Prostate gland (tissue), 2 donors: ENCODE measurements at regions of chr5 and their contacts with region 1.

Region 1: DNA sequence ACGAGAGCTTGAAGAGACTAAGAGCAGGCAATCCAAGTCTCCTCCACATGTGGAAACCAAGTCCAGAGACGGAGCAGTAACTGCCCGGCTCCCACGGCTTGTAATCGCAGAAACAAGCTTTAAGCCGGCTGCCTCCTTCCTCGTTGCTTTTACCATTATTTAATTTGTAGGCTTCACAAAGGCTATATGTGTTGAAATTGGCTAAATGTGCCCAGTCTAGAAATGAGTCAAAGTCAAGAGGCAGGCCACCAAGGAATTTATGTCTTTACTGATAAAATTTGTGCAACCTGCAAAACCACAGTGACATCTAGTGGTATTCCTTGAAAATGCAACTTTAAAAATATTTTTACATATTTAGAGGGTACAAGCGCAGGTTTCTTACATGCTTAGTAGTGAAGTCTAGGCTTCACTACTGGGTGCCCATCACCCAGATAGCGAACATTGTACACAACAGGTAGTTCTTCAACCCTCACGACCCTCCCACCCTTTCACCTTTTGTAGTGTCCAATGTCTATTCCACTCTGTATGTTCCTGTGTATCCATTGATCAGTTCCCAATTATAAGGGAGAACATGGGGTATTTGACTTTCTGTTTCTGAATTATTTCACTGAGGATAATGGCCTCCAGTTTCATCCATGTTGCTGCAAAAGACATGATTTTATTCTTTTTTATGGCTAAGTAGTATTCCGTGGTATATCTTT is 33.5 kb upstream of the EBF1 start:
- DNase-seq: peak; percentile 9
- H3K4me3 ChIP-seq: no peak overlapping the region
- H3K27ac ChIP-seq: no peak overlapping the region
- H3K4me1 ChIP-seq: no peaks in the 10 kb centered on the region
- H3K27me3 ChIP-seq: no peaks in the 10 kb centered on the region
- CTCF ChIP-seq: peak; percentile 26 to 81 (median 76)
- POLR2A ChIP-seq: no peak

Region 2: GRCh38 chr5:157761690-157762621 is 1371.2 kb before region 1 on chr5:
- intact Hi-C with region 1: loop called (anchors 10 kb)
- DNase-seq: peak; percentile 36
- H3K4me3 ChIP-seq: no peak overlapping the region
- H3K27ac ChIP-seq: no peak overlapping the region
- H3K4me1 ChIP-seq: no peaks in the 10 kb centered on the region
- H3K27me3 ChIP-seq: no peaks in the 10 kb centered on the region
- CTCF ChIP-seq: peak; percentile 47 to 76 (median 66)
- POLR2A ChIP-seq: no peak